CD4-positive, alpha-beta T cell (primary cell): ENCODE measurements at regions of chr12 and their contacts with region 1.

Region 1: DNA sequence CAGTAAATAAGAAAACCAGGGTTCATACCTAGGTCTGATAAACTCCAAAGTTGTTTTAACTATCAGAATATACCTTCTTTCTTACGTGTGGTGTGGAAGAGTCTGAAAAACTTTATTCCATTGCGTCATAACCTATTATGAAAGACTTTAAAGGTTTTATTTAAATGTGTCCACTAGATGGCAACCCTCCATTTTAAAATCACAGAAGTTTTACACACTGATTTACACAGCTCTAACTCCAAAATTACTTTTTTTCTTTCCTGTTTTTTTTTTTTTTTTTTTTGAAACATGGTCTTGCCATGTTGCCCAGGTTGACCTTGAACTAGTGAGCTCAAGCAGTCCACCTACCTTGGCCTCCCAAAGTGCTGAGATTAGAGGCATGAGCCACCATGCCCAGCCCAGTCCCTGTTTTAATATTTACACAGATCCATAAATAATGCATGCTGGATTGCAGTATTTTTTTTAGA is 17.3 kb upstream of the TMPRSS12 start:
- DNase-seq: peak in 3 of 14 experiments; percentile 75 to 77 (median 77)
- ATAC-seq: peak; percentile 91
- H3K4me3 ChIP-seq: no peak overlapping the region
- H3K4me3 Mint-ChIP-seq: no peak overlapping the region
- H3K27ac ChIP-seq: peak overlapping the region in 1 of 2 donors; percentile 54
- H3K27ac Mint-ChIP-seq: peak overlapping the region; percentile 83
- H3K4me1 ChIP-seq: peaks cover 5% of the 10 kb centered on the region
- H3K4me1 Mint-ChIP-seq: peaks cover 6% of the 10 kb centered on the region
- H3K27me3 ChIP-seq: peaks cover 0 to 3% of the 10 kb centered on the region in 2 experiments
- H3K27me3 Mint-ChIP-seq: no peaks in the 10 kb centered on the region
- CTCF ChIP-seq: peak; percentile 71

Region 2: GRCh38 chr12:50986966-50987737 is 161.7 kb after region 1 on chr12:
- CTCF ChIA-PET with region 1: interaction called, 4 read pairs
- POLR2A ChIA-PET with region 1: interaction called, 9 read pairs
- intact Hi-C with region 1: loop called (anchors 1 kb)
- DNase-seq: peak in 10 of 14 experiments; percentile 5 to 59 (median 11)
- ATAC-seq: peak; percentile 78
- H3K4me3 ChIP-seq: no peak overlapping the region
- H3K4me3 Mint-ChIP-seq: no peak overlapping the region
- H3K27ac ChIP-seq: no peak overlapping the region
- H3K27ac Mint-ChIP-seq: peak overlapping the region; percentile 65
- H3K4me1 ChIP-seq: no peaks in the 10 kb centered on the region
- H3K4me1 Mint-ChIP-seq: peaks cover 9% of the 10 kb centered on the region
- H3K27me3 ChIP-seq: no peaks in the 10 kb centered on the region
- H3K27me3 Mint-ChIP-seq: no peaks in the 10 kb centered on the region
- CTCF ChIP-seq: peak; percentile 58

Region 3: DNA sequence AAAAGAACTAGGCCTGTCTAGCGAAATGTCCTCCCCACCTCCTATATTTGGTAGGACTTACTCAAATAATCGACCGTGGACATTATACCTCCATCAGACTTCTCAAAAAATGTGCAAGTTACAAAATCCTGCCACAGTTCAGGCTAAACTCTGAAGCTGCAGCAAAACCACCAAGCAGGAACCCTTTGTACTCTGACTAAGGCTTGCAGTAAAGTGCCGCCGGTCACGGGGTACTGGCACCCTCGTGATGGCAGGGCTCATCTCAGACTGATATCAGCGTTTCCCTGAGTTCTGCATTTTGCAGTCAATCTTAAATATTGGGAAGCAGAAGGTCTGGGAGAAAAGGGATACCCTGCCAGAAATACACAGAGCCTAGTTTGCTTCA is 183.6 kb after region 1 on chr12:
- CTCF ChIA-PET with region 1: no interaction called
- POLR2A ChIA-PET with region 1: no interaction called
- intact Hi-C with region 1: loop called in 1 of 2 experiments (anchors 1 kb)
- DNase-seq: peak; percentile 35 to 81 (median 55)
- ATAC-seq: peak; percentile 100
- H3K4me3 ChIP-seq: no peak overlapping the region
- H3K4me3 Mint-ChIP-seq: peak overlapping the region; percentile 62
- H3K27ac ChIP-seq: peak overlapping the region; percentile 14 to 49
- H3K27ac Mint-ChIP-seq: peak overlapping the region; percentile 81
- H3K4me1 ChIP-seq: peaks cover 14% of the 10 kb centered on the region
- H3K4me1 Mint-ChIP-seq: peaks cover 48% of the 10 kb centered on the region
- H3K27me3 ChIP-seq: no peaks in the 10 kb centered on the region
- H3K27me3 Mint-ChIP-seq: no peaks in the 10 kb centered on the region
- CTCF ChIP-seq: no peak

Region 4: DNA sequence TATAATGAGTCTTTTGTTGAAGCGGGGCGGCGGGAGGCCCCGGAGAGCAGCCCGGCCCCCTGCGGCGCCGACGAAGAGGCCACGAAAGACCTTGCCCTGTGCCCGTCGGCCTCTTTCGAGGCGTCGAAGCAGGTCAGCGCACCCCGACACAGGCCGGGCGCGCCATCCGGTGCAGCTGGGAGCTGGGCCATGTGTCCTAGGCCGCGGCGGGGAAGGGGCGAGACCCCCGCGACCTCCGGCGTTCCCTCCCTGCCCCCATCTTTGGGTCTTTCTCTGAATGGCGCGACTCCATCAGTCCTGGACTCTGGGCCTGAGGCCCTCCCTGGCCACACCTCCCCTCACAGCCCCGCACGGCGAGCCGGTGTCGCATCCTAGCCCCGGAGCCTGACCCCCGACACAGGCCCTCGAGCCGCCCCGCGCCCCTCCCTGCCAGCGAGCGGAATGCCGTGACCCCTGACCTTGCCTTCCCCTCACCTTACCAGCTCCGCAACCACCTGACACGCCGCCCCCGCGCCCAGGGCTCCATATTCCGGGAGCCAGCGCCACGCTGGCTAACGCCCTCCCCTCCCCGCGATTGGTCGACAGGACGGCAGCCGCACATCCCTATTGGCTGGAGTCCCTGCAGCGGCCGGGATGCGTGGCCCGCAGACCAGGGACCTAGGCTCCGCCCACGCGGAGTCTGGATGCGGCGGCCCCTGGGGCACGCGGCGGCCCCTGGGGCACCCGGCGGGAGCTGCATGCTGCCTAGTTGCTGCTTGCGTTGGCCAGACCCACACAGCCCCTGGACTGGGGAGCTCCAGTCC is 200.6 kb after region 1 on chr12 and contains the start of gene SLC11A2:
- CTCF ChIA-PET with region 1: interaction called, 6 read pairs
- POLR2A ChIA-PET with region 1: no interaction called
- intact Hi-C with region 1: loop called (anchors 1 to 5 kb)
- DNase-seq: peak; percentile 80 to 96 (median 88)
- ATAC-seq: peak; percentile 86
- H3K4me3 ChIP-seq: peak within 1 kb of the TSS; percentile 83
- H3K4me3 Mint-ChIP-seq: peak within 1 kb of the TSS; percentile 97
- H3K27ac ChIP-seq: peak within 1 kb of the TSS; percentile 78 to 83
- H3K27ac Mint-ChIP-seq: peak within 1 kb of the TSS; percentile 92
- H3K4me1 ChIP-seq: peaks cover 57% of the 10 kb centered on the region
- H3K4me1 Mint-ChIP-seq: peaks cover 63% of the 10 kb centered on the region
- H3K27me3 ChIP-seq: no peaks in the 10 kb centered on the region
- H3K27me3 Mint-ChIP-seq: no peaks in the 10 kb centered on the region
- CTCF ChIP-seq: no peak
- total RNA-seq, gene SLC11A2: 43.6 to 47.7 TPM

Region 5: GRCh38 chr12:51254592-51254991 is 429.2 kb after region 1 on chr12:
- CTCF ChIA-PET with region 1: no interaction called
- POLR2A ChIA-PET with region 1: no interaction called
- intact Hi-C with region 1: loop called in 1 of 2 experiments (anchors 10 kb)
- DNase-seq: no peak
- ATAC-seq: no peak
- H3K4me3 ChIP-seq: no peak overlapping the region
- H3K4me3 Mint-ChIP-seq: no peak overlapping the region
- H3K27ac ChIP-seq: no peak overlapping the region
- H3K27ac Mint-ChIP-seq: no peak overlapping the region
- H3K4me1 ChIP-seq: peaks cover 2% of the 10 kb centered on the region
- H3K4me1 Mint-ChIP-seq: peaks cover 4% of the 10 kb centered on the region
- H3K27me3 ChIP-seq: no peaks in the 10 kb centered on the region
- H3K27me3 Mint-ChIP-seq: no peaks in the 10 kb centered on the region
- CTCF ChIP-seq: no peak

Region 6: DNA sequence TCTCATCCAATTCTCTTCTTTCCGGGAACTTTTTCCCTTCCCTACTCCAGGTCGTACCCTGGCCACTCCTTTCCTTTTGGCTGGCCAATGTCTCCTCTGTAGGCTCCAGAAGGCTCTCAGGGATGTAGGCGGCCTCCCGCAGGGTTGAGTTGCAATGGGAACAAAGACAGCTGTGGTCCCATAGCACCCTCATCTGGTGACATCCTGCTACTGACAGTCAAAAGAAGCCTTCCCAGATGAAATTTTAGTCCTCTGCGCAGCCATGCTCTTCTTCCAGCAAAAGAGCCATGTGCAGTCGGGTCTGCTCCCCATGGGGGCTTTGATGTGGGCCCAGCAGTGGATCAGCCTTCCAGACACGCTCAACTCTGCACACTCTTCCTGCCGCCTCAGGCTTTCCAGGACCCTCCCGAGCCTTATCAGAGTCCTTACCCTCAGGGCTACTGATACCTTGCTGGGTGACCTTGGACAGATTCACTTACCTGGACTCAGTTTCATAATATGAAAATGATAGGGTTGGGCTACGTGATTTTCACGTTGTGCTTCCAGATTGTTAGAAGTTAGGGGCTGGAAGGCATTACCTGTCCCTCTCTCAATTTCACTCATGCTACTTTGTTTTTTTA is 526.6 kb after region 1 on chr12:
- CTCF ChIA-PET with region 1: interaction called, 3 read pairs
- POLR2A ChIA-PET with region 1: no interaction called
- intact Hi-C with region 1: loop called (anchors 1 to 2 kb)
- DNase-seq: peak in 13 of 14 experiments; percentile 16 to 76 (median 27)
- ATAC-seq: peak; percentile 90
- H3K4me3 ChIP-seq: no peak overlapping the region
- H3K4me3 Mint-ChIP-seq: no peak overlapping the region
- H3K27ac ChIP-seq: no peak overlapping the region
- H3K27ac Mint-ChIP-seq: no peak overlapping the region
- H3K4me1 ChIP-seq: peaks cover 5% of the 10 kb centered on the region
- H3K4me1 Mint-ChIP-seq: peaks cover 10% of the 10 kb centered on the region
- H3K27me3 ChIP-seq: no peaks in the 10 kb centered on the region
- H3K27me3 Mint-ChIP-seq: no peaks in the 10 kb centered on the region
- CTCF ChIP-seq: peak; percentile 63

Region 7: DNA sequence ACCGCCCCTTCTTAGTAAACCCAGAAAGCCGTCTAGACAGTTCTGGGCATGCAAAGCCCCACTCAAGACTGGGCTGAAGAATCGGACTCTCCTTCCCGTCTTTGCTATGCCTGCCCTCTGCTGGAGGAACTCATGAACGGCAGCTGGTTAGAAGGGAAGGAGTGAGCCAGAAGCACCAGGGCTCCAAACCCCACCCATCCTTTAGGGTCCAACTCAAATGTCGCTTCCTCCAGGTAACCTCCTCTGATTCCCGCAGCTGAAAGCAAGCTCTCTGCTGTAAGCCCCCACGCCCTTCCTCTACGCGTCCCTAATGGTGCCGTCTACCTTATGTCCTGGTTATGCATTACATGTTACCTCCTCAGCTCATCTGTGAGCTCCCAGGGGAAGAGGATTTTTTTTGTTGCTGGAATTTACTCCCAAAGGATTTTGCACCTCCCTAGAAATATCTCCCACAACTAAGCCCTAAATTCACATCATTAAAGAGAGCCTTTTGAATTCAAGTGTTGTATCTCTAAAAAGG is 706.6 kb after region 1 on chr12:
- CTCF ChIA-PET with region 1: no interaction called
- POLR2A ChIA-PET with region 1: no interaction called
- intact Hi-C with region 1: loop called in 1 of 2 experiments (anchors 5 kb)
- DNase-seq: peak; percentile 56 to 83 (median 64)
- ATAC-seq: peak; percentile 94
- H3K4me3 ChIP-seq: no peak overlapping the region
- H3K4me3 Mint-ChIP-seq: no peak overlapping the region
- H3K27ac ChIP-seq: no peak overlapping the region
- H3K27ac Mint-ChIP-seq: no peak overlapping the region
- H3K4me1 ChIP-seq: peaks cover 6% of the 10 kb centered on the region
- H3K4me1 Mint-ChIP-seq: no peaks in the 10 kb centered on the region
- H3K27me3 ChIP-seq: no peaks in the 10 kb centered on the region
- H3K27me3 Mint-ChIP-seq: peaks cover 7% of the 10 kb centered on the region
- CTCF ChIP-seq: peak; percentile 85